Gastrocnemius medialis (tissue), 4 donors: ENCODE measurements at regions of chr5 and their contacts with region 1.

Region 1: DNA sequence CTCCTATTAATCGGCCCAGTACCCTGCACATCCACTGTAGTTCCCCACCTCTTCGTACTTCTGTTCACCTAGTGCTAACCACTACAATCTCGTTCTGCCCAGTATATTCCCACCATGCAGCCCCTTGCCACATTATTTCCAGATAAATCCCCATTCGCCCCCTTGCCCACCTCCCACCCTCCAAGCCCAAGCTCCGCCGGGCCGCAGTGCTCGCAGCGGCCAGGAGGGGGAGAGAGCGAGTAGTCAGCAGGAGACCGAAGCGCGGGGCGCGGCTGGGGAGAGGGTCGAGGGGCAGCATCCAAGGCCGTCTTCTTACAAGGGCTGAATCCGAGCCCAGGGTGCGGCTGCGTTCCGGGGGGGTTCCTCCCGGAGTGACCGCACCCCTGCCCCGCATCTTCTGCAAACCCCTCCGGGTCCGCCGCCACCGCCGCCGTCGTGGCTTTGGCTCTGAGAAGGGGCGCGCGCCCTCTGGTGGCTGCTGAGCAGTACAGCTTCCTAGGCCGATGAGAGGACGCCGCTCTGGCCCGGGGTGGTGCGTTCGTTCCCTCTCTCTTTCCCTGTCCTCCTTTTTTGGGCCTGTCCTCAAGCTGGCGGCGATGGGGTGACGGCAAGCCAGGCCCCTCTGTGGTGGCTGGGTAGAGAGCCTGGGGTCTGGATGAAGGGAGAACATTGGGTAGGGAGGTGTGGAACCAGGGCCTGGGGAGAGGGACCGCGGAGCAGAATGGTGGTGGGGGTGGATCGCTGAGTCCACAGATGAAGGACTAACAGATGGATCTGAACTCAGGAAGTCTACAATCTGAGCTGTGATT is 30.0 kb upstream of the PSD2 start:
- DNase-seq: peak; percentile 43 to 48
- ATAC-seq: peak; percentile 88 to 92
- H3K4me3 ChIP-seq: peak overlapping the region; percentile 64 to 84 (median 72)
- H3K27ac ChIP-seq: peak overlapping the region in 1 of 4 donors; percentile 49
- H3K4me1 ChIP-seq: peaks cover 0 to 5% of the 10 kb centered on the region in 2 donors
- H3K27me3 ChIP-seq: peaks cover 9 to 12% (median 11%) of the 10 kb centered on the region in 3 donors
- CTCF ChIP-seq: peak; percentile 98 to 100 (median 99)
- POLR2A ChIP-seq: no peak

Region 2: GRCh38 chr5:139422307-139422893 is 343.2 kb before region 1 on chr5:
- in situ Hi-C with region 1: no loop called
- intact Hi-C with region 1: loop called (anchors 2 kb)
- DNase-seq: no peak
- ATAC-seq: peak; percentile 53 to 74
- H3K4me3 ChIP-seq: no peak overlapping the region
- H3K27ac ChIP-seq: peak overlapping the region in 1 of 4 donors; percentile 24
- H3K4me1 ChIP-seq: peaks cover 33 to 46% of the 10 kb centered on the region in 2 donors
- H3K27me3 ChIP-seq: no peaks in the 10 kb centered on the region
- CTCF ChIP-seq: peak; percentile 61 to 82 (median 78)
- POLR2A ChIP-seq: no peak

Region 3: GRCh38 chr5:139690064-139690802 is 75.4 kb before region 1 on chr5:
- in situ Hi-C with region 1: loop called in 2 of 4 experiments (anchors 5 to 10 kb)
- intact Hi-C with region 1: loop called (anchors 2 kb)
- DNase-seq: no peak
- ATAC-seq: no peak
- H3K4me3 ChIP-seq: no peak overlapping the region
- H3K27ac ChIP-seq: peak overlapping the region; percentile 35 to 98 (median 80)
- H3K4me1 ChIP-seq: peaks cover 51 to 66% of the 10 kb centered on the region in 2 donors
- H3K27me3 ChIP-seq: no peaks in the 10 kb centered on the region
- CTCF ChIP-seq: peak; percentile 48 to 80 (median 71)
- POLR2A ChIP-seq: no peak

Region 4: DNA sequence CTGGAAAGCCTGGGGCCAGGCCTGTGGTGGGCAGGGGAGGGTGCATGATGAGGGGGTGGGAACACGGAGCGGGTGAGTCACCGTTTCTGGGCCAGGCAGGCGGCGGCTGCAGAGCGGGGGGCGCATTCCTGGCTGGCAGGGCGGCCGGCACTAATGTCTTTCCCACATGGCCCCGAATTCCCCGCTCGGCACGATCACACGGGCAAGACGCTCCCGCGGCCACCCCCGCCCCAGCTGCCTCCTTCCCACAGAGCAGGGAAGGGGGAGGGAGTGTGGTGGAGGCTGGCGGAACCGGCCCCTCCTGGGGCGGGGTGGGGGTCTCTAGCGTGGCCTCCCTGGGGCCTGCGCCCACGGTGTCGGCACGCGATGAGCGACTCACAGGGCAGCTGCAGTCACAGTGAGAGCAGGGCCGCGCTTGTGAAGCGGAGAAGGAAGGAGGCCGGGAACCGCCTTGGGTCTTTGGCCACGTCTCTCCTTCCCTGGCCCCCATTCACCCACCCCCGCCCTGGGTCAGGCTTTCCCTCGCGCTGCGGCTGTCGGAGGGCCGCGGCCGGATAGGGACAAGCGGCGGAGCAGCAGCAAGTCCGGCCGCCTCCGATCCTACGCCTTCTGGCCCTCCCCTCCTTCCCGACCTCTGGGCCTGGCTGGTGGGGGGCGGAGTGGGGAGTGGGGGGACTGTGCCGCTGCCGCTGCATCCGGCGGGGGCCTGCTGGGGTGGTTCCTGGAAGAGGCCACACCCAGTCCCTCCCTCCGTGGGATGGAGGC is 68.5 kb before region 1 on chr5:
- in situ Hi-C with region 1: loop called in 3 of 4 experiments (anchors 5 to 10 kb)
- intact Hi-C with region 1: no loop called
- DNase-seq: no peak
- ATAC-seq: peak; percentile 37 to 42
- H3K4me3 ChIP-seq: peak overlapping the region; percentile 49 to 68 (median 60)
- H3K27ac ChIP-seq: peak overlapping the region; percentile 56 to 80 (median 78)
- H3K4me1 ChIP-seq: peaks cover 32 to 42% of the 10 kb centered on the region in 2 donors
- H3K27me3 ChIP-seq: no peaks in the 10 kb centered on the region
- CTCF ChIP-seq: no peak
- POLR2A ChIP-seq: no peak

Region 5: GRCh38 chr5:139708877-139709581 is 56.6 kb before region 1 on chr5:
- in situ Hi-C with region 1: loop called in 2 of 4 experiments (anchors 5 to 10 kb)
- intact Hi-C with region 1: no loop called
- DNase-seq: no peak
- ATAC-seq: peak; percentile 27 to 35
- H3K4me3 ChIP-seq: peak overlapping the region; percentile 38 to 60 (median 50)
- H3K27ac ChIP-seq: peak overlapping the region; percentile 44 to 65 (median 54)
- H3K4me1 ChIP-seq: peaks cover 8 to 25% of the 10 kb centered on the region in 2 donors
- H3K27me3 ChIP-seq: peaks cover 0 to 17% (median 4%) of the 10 kb centered on the region in 3 donors
- CTCF ChIP-seq: no peak
- POLR2A ChIP-seq: peak in 1 of 2 donors; percentile 14

Region 6: GRCh38 chr5:139725073-139725830 is 40.4 kb before region 1 on chr5:
- in situ Hi-C with region 1: no loop called
- intact Hi-C with region 1: no loop called
- DNase-seq: no peak
- ATAC-seq: peak in 1 of 2 donors; percentile 39
- H3K4me3 ChIP-seq: no peak overlapping the region
- H3K27ac ChIP-seq: no peak overlapping the region
- H3K4me1 ChIP-seq: no peaks in the 10 kb centered on the region
- H3K27me3 ChIP-seq: no peaks in the 10 kb centered on the region
- CTCF ChIP-seq: no peak
- POLR2A ChIP-seq: no peak